Activated B cell treated with CpG ODN at 0.5 μM for 24 hours (primary cell): ENCODE measurements at regions of chr1 and their contacts with region 1.

Region 1: DNA sequence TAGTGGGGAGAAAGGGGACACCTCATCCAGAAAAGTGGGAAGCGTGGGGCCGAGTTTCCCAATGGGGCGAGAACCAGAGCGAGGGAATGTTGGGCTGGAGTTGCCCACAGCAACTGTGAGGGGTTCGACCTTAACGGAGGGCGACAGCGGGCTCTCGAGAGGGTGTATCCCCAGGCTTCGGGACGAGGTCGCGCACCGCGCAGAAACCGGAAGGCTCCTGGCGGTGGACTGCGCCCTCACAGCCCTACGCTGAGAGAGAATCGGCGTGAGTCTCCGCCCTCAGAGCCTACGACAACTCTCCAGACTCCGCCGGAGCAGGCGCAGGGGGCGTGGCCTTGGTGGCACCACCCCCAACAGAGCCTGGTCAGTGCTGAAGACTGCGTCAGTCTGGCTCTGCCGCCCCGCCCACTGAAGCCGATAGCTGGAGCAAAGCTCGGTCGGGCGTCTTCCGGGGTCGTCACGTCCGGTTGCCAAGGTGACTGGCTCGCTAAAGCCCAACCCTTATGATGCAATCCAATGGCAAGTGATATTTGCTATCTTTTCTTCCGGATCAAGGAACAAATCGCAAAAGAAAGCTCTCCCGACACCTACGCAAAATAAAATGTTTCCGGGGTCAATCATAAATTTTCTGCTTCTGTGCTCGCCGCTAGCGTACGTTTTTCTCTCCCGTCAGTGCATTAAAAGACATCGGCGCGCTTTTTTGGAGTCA is at the start of gene LRIF1:
- DNase-seq: peak; percentile 99
- ATAC-seq: peak; percentile 97
- H3K4me3 Mint-ChIP-seq: peak within 1 kb of the TSS; percentile 84
- H3K27ac Mint-ChIP-seq: peak within 1 kb of the TSS; percentile 91
- H3K4me1 Mint-ChIP-seq: peaks cover 38% of the 10 kb centered on the region
- H3K27me3 Mint-ChIP-seq: peaks cover 10% of the 10 kb centered on the region
- CTCF ChIP-seq: no peak
- total RNA-seq, gene LRIF1: 16.7 and 17.0 TPM in 2 replicates

Region 2: DNA sequence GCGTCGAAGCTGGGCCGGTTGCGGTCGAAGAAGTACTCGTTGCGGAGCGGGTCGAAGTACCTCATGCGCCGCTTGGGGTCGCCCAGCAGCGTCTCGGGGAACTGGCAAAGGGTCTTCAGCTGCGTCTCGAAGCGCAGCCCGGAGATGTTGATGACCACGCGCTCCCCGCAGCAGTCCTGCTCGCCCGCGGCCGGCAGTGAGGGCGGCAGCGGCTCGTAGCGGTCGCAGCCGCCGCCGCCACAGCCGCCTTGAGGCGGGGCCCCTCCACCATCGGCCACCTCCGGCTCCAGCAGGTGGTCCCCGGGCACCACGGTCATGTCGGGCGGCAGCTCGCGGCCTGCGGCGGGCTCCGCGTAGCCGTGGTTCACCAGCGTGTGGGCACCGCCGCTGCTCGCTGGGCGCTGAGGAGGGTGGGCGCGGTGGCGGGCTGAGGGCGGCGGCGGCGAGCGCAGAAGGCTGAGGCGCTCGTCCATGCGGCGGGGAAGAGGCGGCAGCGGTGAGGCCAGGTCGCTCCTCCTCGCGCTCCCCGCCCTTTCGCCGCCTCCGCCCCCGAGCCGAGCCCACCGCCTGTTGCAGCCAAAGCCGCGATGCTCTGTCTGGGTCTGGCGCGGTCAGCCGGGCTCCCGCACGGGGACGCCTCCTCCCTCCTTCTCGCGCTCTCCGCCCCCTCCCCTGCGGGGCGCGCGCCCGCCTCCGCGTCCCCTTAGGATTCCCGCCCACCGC is 289.3 kb before region 1 on chr1 and contains the start of gene KCNA3:
- CTCF ChIA-PET with region 1: no interaction called
- POLR2A ChIA-PET with region 1: interaction called, 3 read pairs
- intact Hi-C with region 1: loop called (anchors 5 kb)
- DNase-seq: peak; percentile 68
- ATAC-seq: peak; percentile 62
- H3K4me3 Mint-ChIP-seq: peak within 1 kb of the TSS; percentile 90
- H3K27ac Mint-ChIP-seq: peak within 1 kb of the TSS; percentile 80
- H3K4me1 Mint-ChIP-seq: peaks cover 60% of the 10 kb centered on the region
- H3K27me3 Mint-ChIP-seq: no peaks in the 10 kb centered on the region
- CTCF ChIP-seq: no peak
- total RNA-seq, gene KCNA3: 15.0 and 20.0 TPM in 2 replicates

Region 3: GRCh38 chr1:110787328-110788071 is 176.3 kb before region 1 on chr1:
- CTCF ChIA-PET with region 1: interaction called, 8 read pairs
- POLR2A ChIA-PET with region 1: interaction called, 17 read pairs
- intact Hi-C with region 1: loop called (anchors 1 kb)
- DNase-seq: peak; percentile 49
- ATAC-seq: peak; percentile 85
- H3K4me3 Mint-ChIP-seq: peak overlapping the region; percentile 70
- H3K27ac Mint-ChIP-seq: peak overlapping the region; percentile 95
- H3K4me1 Mint-ChIP-seq: peaks cover 70% of the 10 kb centered on the region
- H3K27me3 Mint-ChIP-seq: no peaks in the 10 kb centered on the region
- CTCF ChIP-seq: no peak

Region 4: DNA sequence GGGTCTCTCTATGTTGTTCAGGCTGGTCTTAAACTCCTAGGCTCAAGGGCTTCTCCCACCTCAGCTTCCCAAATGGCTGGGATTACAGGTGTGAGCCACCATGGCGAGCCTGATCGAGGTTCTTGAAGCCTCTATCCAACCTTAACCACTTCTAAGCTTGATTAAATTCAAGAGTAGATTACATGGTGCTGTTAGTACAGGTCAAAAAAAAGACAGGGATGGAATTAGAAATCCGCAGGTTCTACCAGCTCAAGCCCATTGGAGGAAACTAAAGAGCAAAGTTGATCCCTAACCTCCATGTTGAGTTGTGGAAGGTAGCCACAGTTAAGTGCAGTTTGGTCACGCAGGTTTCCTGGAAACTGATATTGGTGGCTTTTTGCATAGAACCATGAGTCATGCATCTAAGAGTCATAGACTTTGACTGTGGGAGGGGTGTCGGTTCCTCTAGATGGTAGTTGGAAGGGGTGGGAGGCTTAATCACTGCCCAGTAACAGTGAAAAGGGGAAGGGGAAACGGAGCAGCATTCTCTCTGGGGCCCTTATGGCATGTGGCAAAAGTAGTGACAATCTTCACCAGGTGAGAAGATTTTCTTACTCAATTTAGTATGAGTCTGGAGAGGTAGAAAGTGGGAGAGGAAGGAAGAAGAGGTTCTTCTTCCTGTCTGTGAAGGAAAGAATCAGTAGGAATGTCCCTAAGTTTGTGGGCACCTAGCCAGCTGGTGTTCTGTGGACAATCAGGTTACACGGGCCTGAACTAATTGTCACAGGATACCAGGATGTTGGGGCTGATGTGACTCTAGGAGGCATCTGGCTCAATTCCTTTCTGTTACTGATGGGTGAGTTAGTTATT is 83.9 kb before region 1 on chr1:
- CTCF ChIA-PET with region 1: no interaction called
- POLR2A ChIA-PET with region 1: interaction called, 51 read pairs
- intact Hi-C with region 1: loop called (anchors 1 kb)
- DNase-seq: no peak
- ATAC-seq: peak; percentile 79
- H3K4me3 Mint-ChIP-seq: peak overlapping the region; percentile 73
- H3K27ac Mint-ChIP-seq: peak overlapping the region; percentile 93
- H3K4me1 Mint-ChIP-seq: peaks cover 95% of the 10 kb centered on the region
- H3K27me3 Mint-ChIP-seq: no peaks in the 10 kb centered on the region
- CTCF ChIP-seq: no peak

Region 5: GRCh38 chr1:110936567-110936966 is 27.3 kb before region 1 on chr1:
- CTCF ChIA-PET with region 1: no interaction called
- POLR2A ChIA-PET with region 1: no interaction called
- intact Hi-C with region 1: no loop called
- DNase-seq: no peak
- ATAC-seq: no peak
- H3K4me3 Mint-ChIP-seq: no peak overlapping the region
- H3K27ac Mint-ChIP-seq: no peak overlapping the region
- H3K4me1 Mint-ChIP-seq: no peaks in the 10 kb centered on the region
- H3K27me3 Mint-ChIP-seq: no peaks in the 10 kb centered on the region
- CTCF ChIP-seq: no peak

Region 6: DNA sequence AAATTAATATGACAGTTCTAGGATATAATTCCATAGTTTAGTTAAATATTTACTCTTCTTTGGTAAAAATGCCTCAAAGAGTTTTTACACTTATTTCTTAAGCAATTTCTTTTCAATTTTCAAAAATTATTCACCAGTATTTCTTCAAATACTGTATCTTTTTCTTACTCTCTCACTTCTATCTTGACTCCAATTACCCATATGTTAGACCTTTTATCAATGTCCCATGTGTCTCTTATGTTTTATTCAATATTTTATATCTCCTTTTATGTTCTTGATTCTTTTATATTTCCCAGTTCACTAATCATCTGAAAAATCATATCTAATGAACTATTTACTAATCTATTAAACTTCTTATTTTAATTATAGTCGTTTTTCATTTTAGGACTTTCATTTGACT is 11.4 kb after region 1 on chr1:
- CTCF ChIA-PET with region 1: no interaction called
- POLR2A ChIA-PET with region 1: interaction called, 10 read pairs
- intact Hi-C with region 1: no loop called
- DNase-seq: no peak
- ATAC-seq: no peak
- H3K4me3 Mint-ChIP-seq: no peak overlapping the region
- H3K27ac Mint-ChIP-seq: no peak overlapping the region
- H3K4me1 Mint-ChIP-seq: no peaks in the 10 kb centered on the region
- H3K27me3 Mint-ChIP-seq: peaks cover 51% of the 10 kb centered on the region
- CTCF ChIP-seq: no peak

Region 7: DNA sequence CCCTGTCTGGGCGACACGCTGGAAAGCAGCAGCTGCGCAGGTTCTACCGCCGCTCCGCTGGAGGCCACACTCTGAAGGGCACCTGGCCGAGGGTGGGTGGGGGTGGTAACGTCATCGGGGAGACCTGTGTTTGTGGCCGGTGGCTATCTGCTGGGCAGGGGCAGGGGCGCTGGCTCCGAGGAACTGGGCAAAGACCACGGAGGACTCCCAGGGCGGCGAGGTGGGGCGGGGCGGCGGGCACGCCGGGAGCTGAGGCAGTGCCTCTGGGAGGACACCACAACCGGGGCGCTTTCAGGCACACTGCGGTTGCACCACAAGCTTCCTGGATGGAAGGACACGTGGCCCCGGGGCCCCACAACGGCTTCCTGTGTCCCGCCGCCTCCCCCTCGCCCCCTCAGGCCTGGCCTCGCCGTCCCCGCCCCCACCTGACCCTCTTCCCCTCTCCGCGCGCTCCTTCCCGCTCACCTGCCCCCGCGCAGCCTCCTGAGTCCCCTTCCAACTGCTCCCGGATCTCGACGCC is 239.9 kb after region 1 on chr1:
- CTCF ChIA-PET with region 1: no interaction called
- POLR2A ChIA-PET with region 1: interaction called, 4 read pairs
- intact Hi-C with region 1: loop called (anchors 1 kb)
- DNase-seq: peak; percentile 80
- ATAC-seq: peak; percentile 59
- H3K4me3 Mint-ChIP-seq: peak overlapping the region; percentile 89
- H3K27ac Mint-ChIP-seq: peak overlapping the region; percentile 93
- H3K4me1 Mint-ChIP-seq: peaks cover 85% of the 10 kb centered on the region
- H3K27me3 Mint-ChIP-seq: no peaks in the 10 kb centered on the region
- CTCF ChIP-seq: no peak

Region 8: GRCh38 chr1:111227851-111228747 is 264.3 kb after region 1 on chr1:
- CTCF ChIA-PET with region 1: no interaction called
- POLR2A ChIA-PET with region 1: no interaction called
- intact Hi-C with region 1: no loop called
- DNase-seq: no peak
- ATAC-seq: no peak
- H3K4me3 Mint-ChIP-seq: no peak overlapping the region
- H3K27ac Mint-ChIP-seq: peak overlapping the region; percentile 69
- H3K4me1 Mint-ChIP-seq: peaks cover 83% of the 10 kb centered on the region
- H3K27me3 Mint-ChIP-seq: no peaks in the 10 kb centered on the region
- CTCF ChIP-seq: no peak